Colonic mucosa (tissue), 4 donors: ENCODE measurements at regions of chr2 and their contacts with region 1.

Region 1: GRCh38 chr2:219294356-219295351 is 14.5 kb downstream of the PTPRN start:
- DNase-seq: peak; percentile 91
- H3K4me3 ChIP-seq: peak overlapping the region; percentile 53
- H3K27ac ChIP-seq: peak overlapping the region; percentile 51
- H3K4me1 ChIP-seq: no peaks in the 10 kb centered on the region
- H3K27me3 ChIP-seq: no peaks in the 10 kb centered on the region
- CTCF ChIP-seq: peak; percentile 99

Region 2: GRCh38 chr2:218892693-218893348 is 401.8 kb before region 1 on chr2:
- intact Hi-C with region 1: no loop called
- DNase-seq: peak; percentile 79
- H3K4me3 ChIP-seq: peak overlapping the region; percentile 34
- H3K27ac ChIP-seq: peak overlapping the region; percentile 11
- H3K4me1 ChIP-seq: peaks cover 12% of the 10 kb centered on the region
- H3K27me3 ChIP-seq: peaks cover 31% of the 10 kb centered on the region
- CTCF ChIP-seq: peak; percentile 22

Region 3: DNA sequence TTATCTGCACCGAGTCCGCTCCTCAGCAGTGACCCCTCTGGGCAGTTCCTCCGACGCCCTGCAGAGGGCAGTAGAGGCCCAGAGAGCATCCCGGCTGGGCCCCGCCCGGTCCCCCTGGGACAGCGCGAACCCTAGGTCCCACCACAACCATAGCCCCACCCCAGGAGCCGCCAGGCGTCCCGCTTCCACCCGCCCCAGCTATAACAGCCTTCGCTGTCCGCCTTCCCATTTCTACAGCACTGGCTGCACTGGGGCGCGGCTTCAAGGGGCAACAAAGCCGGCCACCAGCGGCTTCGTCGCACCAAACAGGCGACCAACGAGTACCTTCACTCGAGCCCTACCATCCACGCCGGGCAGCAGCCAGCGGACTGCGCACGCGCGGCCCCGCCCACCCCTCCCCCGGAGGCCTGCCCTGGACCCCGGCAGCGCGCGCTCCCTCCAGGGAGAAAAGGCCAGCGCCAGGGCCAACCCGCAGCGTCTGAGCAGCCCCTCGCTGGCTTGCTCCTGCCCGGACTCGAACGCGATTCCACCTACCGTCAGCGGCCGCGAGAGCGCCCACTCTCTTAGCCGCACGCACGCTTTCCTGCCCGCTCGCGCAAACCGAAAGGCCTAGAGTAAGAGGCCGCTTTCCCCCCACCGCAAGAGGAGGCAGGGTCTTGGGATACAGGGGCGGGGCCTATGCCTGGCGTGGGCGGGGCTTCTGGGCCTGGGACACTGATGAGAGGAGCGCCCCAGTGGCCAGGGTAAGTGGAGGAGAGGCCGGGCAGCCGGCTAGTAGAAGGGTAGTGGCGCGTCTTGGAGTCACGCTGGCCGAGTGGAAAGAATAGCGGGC is 134.3 kb before region 1 on chr2 and contains the start of gene NHEJ1:
- intact Hi-C with region 1: loop called (anchors 2 kb)
- DNase-seq: peak; percentile 100
- H3K4me3 ChIP-seq: peak within 1 kb of the TSS; percentile 60
- H3K27ac ChIP-seq: peak within 1 kb of the TSS; percentile 94
- H3K4me1 ChIP-seq: no peaks in the 10 kb centered on the region
- H3K27me3 ChIP-seq: no peaks in the 10 kb centered on the region
- CTCF ChIP-seq: peak; percentile 100
- total RNA-seq, gene NHEJ1: 30.7 to 51.1 TPM

Region 4: DNA sequence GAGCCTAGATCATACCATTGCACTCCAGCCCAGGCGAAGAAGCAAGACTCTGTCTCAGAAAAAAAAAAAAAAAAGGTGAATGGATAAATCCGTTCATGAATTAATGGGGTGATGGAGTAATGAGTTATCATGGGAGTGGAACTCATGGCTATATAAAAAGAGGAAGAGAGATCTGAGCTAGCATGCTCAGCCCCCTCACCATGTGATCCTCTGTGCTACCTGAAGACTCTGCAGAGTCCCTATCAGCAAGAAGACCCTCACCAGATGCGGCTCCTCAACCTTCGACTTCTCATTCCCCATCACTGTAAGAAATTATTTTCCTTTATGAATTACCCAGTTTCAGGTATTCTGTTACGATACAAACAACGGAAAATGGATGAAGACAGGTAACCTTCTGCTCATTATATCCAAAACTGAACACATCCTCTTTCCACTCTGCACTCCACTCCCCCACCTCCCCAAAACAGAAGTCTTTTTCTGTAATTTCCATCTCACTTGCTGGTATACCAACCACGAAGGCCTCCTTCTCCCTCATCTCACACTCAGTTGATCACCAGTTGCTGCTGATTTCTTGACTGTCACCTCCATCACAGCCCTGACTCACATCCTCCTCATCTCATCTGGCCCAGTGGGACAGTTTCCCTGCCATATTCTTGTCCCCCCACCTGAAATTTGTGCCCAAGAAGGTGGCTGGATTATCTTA is 107.7 kb before region 1 on chr2:
- intact Hi-C with region 1: no loop called
- DNase-seq: peak; percentile 7
- H3K4me3 ChIP-seq: no peak overlapping the region
- H3K27ac ChIP-seq: no peak overlapping the region
- H3K4me1 ChIP-seq: no peaks in the 10 kb centered on the region
- H3K27me3 ChIP-seq: no peaks in the 10 kb centered on the region
- CTCF ChIP-seq: no peak

Region 5: GRCh38 chr2:219229305-219230058 is 65.2 kb before region 1 on chr2 and contains the starts of genes ANKZF1 and ATG9A:
- intact Hi-C with region 1: loop called (anchors 10 kb)
- DNase-seq: peak; percentile 99
- H3K4me3 ChIP-seq: peak within 1 kb of the TSS; percentile 63
- H3K27ac ChIP-seq: peak within 1 kb of the TSS; percentile 88
- H3K4me1 ChIP-seq: peaks cover 7% of the 10 kb centered on the region
- H3K27me3 ChIP-seq: no peaks in the 10 kb centered on the region
- CTCF ChIP-seq: no peak
- total RNA-seq, gene ANKZF1: 56.7 to 67.1 TPM
- total RNA-seq, gene ATG9A: 56.4 to 63.8 TPM

Region 6: GRCh38 chr2:220478305-220479083 is 1183.8 kb after region 1 on chr2:
- intact Hi-C with region 1: no loop called
- DNase-seq: no peak
- H3K4me3 ChIP-seq: no peak overlapping the region
- H3K27ac ChIP-seq: no peak overlapping the region
- H3K4me1 ChIP-seq: no peaks in the 10 kb centered on the region
- H3K27me3 ChIP-seq: no peaks in the 10 kb centered on the region
- CTCF ChIP-seq: no peak